ENCODE measurements at regions of chr14 and their contacts with region 1.

Region 1: DNA sequence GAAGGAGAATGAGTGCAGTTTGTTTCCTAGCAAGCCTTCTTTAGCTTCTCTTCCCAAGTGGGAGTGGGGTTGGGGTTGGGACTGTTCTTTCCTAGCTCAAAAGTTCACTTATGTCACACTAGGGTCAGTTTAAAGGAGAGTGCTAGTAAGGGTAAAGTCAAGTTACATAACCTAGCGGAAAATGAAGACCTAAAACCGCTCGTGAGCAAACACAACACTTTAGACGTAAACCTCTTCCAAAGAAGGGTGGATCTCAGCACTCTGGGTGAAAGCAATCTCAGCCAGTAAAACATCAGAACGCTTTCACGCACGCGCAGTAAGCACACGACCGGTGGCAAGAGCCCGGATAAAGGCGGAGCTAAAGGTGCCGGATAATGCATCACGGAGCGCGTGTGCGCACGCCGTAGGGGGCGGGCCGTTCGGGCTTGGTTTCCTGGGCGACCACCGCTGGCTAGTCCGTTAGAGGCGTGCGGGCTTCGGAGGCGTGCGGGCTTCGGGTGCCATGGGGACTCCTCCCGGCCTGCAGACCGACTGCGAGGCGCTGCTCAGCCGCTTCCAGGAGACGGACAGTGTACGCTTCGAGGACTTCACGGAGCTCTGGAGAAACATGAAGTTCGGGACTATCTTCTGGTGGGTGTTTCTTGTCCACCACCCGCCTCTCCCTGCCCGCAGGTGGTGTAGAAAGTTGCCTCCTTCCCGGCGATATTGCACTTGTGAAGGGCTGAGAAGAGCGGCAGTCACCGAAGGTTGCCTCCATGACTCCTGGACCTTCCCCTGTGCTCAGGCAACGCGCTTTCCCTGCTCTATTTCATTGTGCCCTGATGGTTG is at the start of gene SNAPC1:
- DNase-seq: peak; percentile 97
- H3K4me3 ChIP-seq: peak within 1 kb of the TSS; percentile 95
- H3K27ac ChIP-seq: peak within 1 kb of the TSS; percentile 58
- H3K27me3 ChIP-seq: no peaks in the 10 kb centered on the region
- CTCF ChIP-seq: no peak
- polyA plus RNA-seq, gene SNAPC1: 11.3 and 18.6 TPM in 2 replicates

Region 2: DNA sequence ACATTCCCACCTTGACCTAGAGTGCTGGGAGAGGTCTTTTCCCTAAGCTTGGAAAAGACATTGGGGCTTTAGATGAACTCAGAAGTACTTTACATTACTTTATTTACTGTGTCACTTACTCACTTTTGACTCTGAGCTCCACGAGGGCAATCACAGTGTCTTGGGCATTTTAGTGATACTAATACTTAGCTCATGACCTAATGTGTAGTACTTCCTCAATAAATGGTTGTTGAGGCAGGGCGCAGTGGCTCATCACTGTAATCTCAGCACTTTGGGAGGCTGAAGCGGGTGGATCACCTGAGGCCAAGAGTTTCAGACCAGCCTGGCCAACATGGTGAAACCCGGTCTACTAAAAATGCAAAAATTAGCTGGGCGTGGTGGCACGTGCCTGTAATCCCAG is 19.8 kb before region 1 on chr14:
- CTCF ChIA-PET with region 1: interaction called, 5 read pairs
- POLR2A ChIA-PET with region 1: interaction called, 13 read pairs
- DNase-seq: no peak
- H3K4me3 ChIP-seq: no peak overlapping the region
- H3K27ac ChIP-seq: no peak overlapping the region
- H3K27me3 ChIP-seq: no peaks in the 10 kb centered on the region
- CTCF ChIP-seq: no peak

Region 3: DNA sequence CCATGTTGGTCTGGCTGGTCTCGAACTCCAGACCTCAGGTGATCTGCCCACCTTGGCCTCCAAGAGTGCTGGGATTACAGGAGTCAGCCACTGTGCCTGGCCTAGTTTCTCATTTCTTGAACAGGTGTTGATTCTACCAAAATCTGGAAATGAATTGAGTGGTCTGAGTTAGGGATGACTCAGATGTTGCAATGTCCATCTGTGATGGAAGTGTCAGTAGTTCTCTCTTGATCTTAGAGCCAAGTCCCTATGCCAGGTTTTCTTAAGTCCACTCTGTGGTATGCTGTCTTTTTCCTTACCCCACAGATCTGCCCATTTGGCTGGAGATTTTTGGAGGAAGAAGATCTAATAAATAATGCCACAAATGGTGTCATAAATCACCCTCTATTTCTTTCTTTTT is 12.7 kb after region 1 on chr14:
- CTCF ChIA-PET with region 1: no interaction called
- POLR2A ChIA-PET with region 1: interaction called, 10 read pairs
- DNase-seq: no peak
- H3K4me3 ChIP-seq: no peak overlapping the region
- H3K27ac ChIP-seq: no peak overlapping the region
- H3K27me3 ChIP-seq: no peaks in the 10 kb centered on the region
- CTCF ChIP-seq: no peak